Kidney (tissue), 22 donors: ENCODE measurements at regions of chr3 and their contacts with region 1.

Region 1: DNA sequence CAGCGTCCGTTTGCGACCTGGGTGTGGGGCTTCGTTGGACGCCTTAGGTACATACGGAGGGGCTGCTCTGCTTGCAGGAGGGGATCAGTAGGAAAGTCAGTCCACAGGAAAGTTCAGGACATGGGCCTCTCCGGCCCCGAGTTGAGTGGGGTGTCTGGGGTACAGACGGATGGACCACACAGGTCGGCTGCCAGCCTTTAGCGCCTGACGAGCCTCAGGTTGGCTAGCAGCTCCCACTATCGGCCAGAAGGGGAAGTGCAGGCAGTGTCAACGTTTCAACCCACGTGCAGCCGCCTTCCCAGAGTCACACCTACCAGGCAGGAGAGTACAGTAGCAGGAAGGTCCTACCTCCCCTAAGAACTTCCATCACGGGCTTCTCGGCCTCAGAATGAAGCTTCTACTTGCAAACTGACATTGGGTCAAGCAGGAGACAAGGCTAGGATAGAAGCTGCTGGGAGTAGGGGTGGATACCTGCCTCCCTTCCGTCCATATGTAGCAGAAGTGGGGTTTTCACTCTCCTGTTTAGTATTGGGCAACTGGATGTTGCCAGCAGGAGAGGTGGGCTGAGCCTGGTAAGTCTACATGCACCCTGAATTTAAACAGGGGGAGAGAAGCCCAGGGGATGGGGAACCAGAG is 1.8 kb upstream of the SCN5A start:
- DNase-seq: peak; percentile 72 to 86 (median 79)
- H3K4me3 ChIP-seq: no peak overlapping the region
- H3K27ac ChIP-seq: no peak overlapping the region
- H3K4me1 ChIP-seq: peaks cover 0 to 14% (median 0%) of the 10 kb centered on the region in 3 donors
- H3K27me3 ChIP-seq: peaks cover 2% of the 10 kb centered on the region
- CTCF ChIP-seq: peak; percentile 93

Region 2: GRCh38 chr3:38521391-38521987 is 129.8 kb before region 1 on chr3:
- intact Hi-C with region 1: loop called (anchors 10 kb)
- DNase-seq: peak in 4 of 5 donors; percentile 83 to 89 (median 85)
- H3K4me3 ChIP-seq: no peak overlapping the region
- H3K27ac ChIP-seq: no peak overlapping the region
- H3K4me1 ChIP-seq: no peaks in the 10 kb centered on the region
- H3K27me3 ChIP-seq: no peaks in the 10 kb centered on the region
- CTCF ChIP-seq: peak; percentile 87

Region 3: GRCh38 chr3:38878646-38879045 is 227.4 kb after region 1 on chr3:
- intact Hi-C with region 1: no loop called
- DNase-seq: no peak
- H3K4me3 ChIP-seq: no peak overlapping the region
- H3K27ac ChIP-seq: no peak overlapping the region
- H3K4me1 ChIP-seq: no peaks in the 10 kb centered on the region
- H3K27me3 ChIP-seq: no peaks in the 10 kb centered on the region
- CTCF ChIP-seq: no peak